HEK293T (cell line): ENCODE measurements at regions of chr16 and their contacts with region 1.

Region 1: GRCh38 chr16:30844671-30845449 is 49.0 kb downstream of the BCL7C start:
- DNase-seq: peak; percentile 93

Region 2: DNA sequence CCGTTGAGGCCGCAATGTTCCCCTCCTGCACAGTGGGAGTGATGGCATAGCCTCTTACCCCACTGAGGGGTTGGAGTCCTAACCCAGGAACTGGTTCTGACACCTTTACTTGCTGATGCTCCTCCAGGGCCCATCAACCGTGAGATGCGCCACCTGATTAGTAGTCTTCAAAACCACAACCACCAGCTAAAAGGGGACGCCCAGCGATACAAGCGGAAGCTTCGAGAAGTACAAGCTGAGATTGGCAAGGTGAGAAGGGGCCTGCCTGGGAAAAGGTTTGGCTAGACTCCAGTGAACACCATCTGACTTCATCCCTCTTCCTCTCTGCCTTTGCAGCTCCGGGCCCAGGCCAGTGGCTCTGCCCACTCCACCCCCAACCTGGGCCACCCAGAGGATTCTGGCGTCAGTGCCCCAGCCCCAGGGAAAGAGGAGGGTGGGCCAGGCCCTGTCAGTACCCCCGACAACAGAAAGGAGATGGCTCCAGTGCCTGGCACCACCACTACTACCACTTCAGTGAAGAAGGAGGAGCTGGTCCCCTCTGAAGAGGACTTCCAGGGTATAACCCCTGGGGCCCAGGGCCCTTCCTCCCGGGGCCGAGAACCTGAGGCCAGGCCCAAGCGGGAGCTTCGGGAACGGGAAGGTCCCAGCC is 77.0 kb before region 1 on chr16:
- CTCF ChIA-PET with region 1: no interaction called
- POLR2A ChIA-PET with region 1: no interaction called
- DNase-seq: no peak

Region 3: DNA sequence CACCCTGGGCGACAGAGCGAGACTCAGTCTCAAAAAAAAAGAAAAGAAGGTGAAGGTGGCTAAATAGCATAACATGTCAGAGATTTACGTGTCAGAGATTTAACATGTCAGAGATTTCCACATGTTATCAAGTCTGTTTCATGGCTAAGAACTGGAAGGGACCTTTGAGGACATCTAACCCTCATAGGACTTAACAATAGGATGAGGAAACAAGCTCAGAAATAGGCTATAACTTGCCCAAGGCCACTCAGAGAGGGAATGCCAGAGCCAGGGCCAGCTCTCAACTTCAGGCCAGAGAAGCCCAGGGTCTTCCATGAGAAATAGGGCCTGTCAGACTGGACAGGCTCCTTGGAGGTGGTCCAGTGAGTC is 31.1 kb before region 1 on chr16:
- CTCF ChIA-PET with region 1: interaction called, 16 read pairs
- POLR2A ChIA-PET with region 1: interaction called, 7 read pairs
- DNase-seq: no peak

Region 4: GRCh38 chr16:30867747-30868146 is 22.9 kb after region 1 on chr16:
- CTCF ChIA-PET with region 1: interaction called, 11 read pairs
- POLR2A ChIA-PET with region 1: interaction called, 5 read pairs
- DNase-seq: peak; percentile 69

Region 5: GRCh38 chr16:30902029-30902972 is 57.4 kb after region 1 on chr16:
- CTCF ChIA-PET with region 1: interaction called, 41 read pairs
- POLR2A ChIA-PET with region 1: interaction called, 38 read pairs
- DNase-seq: peak; percentile 91

Region 6: GRCh38 chr16:30921748-30922419 is 77.0 kb after region 1 on chr16:
- CTCF ChIA-PET with region 1: interaction called, 34 read pairs
- POLR2A ChIA-PET with region 1: interaction called, 4 read pairs
- DNase-seq: peak; percentile 95

Region 7: DNA sequence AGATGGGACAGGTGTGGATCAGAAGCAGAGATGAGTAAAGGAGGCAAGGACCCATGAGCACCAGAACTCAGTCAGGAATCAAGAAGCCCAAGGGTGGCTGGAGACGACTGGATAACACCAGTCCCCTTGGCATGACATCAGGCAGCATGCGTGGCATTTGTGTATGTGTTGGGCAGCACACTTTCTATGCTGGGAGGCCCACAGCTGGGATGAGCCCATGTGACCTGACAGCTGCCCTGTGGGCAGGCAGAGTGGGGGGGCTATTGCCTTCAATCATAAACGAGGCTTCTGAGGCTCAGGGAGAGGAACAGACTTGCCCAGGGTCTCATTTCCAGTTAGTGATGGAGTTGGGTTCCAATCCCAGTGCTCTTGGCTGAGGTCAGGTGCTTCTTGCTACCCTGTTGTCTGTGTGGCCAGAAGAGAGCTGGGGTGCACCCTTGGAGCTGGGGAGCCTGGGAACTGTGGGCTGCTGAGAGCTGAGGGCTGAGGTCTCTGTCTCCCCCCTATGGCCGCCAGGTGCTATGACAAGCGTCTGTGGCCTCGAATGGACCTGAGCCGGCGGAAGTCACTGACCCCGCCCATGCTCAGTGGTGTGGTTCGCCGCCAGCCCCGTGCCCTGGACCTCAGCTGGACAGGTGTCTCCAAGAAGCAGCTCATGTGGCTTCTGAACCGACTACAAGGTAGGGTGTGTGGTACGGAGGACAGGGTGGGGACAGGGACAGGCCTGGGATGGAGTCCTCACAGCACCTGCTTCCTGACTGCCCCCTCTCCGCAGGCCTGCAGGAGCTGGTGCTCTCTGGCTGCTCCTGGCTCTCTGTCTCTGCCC is 97.0 kb after region 1 on chr16:
- CTCF ChIA-PET with region 1: interaction called, 17 read pairs
- POLR2A ChIA-PET with region 1: no interaction called
- DNase-seq: peak; percentile 93